HepG2 (cell line): ENCODE measurements at regions of chr13 and their contacts with region 1.

Region 1: DNA sequence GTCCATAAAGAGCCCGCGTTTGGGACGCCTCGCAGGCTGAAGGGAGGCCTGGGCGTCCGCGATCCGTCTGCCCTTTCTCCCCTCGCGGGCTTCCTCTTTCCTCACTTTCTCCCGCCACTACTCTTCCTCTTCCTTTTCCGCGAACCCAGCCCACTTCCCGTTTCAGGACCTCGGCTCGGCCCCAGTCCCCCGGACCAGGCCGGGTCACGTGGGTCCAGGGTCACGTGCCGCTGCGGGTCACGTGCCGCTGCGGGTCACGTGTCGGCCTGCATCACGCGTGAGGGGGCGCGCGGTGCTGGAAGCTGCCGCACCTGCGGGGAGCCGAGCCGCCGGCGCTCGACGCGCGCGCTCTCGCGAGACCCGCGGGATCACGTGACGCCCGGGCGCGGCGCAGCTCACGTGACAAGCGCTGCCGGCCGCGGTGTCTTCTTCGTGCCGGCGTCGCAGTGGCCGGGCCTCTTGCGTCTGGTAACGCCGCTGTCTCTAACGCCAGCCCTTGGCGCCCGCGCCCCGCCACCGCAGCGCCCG is at the start of gene LAMP1:
- DNase-seq: peak; percentile 89
- ATAC-seq: peak; percentile 58
- H3K4me3 ChIP-seq: peak within 1 kb of the TSS; percentile 82 to 90 (median 89)
- H3K27ac ChIP-seq: peak within 1 kb of the TSS; percentile 71
- H3K4me1 ChIP-seq: peaks cover 46% of the 10 kb centered on the region
- H3K27me3 ChIP-seq: no peaks in the 10 kb centered on the region; a peak in 1 of 5 replicates
- CTCF ChIP-seq: peak; percentile 42; the same call in 1 of the 2 replicates
- EP300 ChIP-seq: peak; percentile 78; a peak in 3 of 4 replicates
- POLR2A ChIP-seq: peak; percentile 62 to 63
- RAD21 ChIP-seq: peak; percentile 79
- total RNA-seq, gene LAMP1: 33.2 and 112 TPM in 2 replicates

Region 2: GRCh38 chr13:112873851-112874750 is 422.8 kb before region 1 on chr13:
- CTCF ChIA-PET with region 1: no interaction called
- POLR2A ChIA-PET with region 1: no interaction called
- in situ Hi-C with region 1: no loop called
- intact Hi-C with region 1: no loop called
- DNase-seq: peak; percentile 67
- ATAC-seq: peak; percentile 93
- H3K4me3 ChIP-seq: no peak overlapping the region
- H3K27ac ChIP-seq: no peak overlapping the region
- H3K4me1 ChIP-seq: peaks cover 6% of the 10 kb centered on the region; the same call in 1 of the 2 replicates
- H3K27me3 ChIP-seq: no peaks in the 10 kb centered on the region
- CTCF ChIP-seq: peak; percentile 91
- EP300 ChIP-seq: no peak
- POLR2A ChIP-seq: no peak
- RAD21 ChIP-seq: peak; percentile 80

Region 3: GRCh38 chr13:112990783-112991182 is 306.1 kb before region 1 on chr13:
- CTCF ChIA-PET with region 1: no interaction called
- POLR2A ChIA-PET with region 1: no interaction called
- in situ Hi-C with region 1: no loop called
- intact Hi-C with region 1: no loop called
- DNase-seq: no peak
- ATAC-seq: no peak
- H3K4me3 ChIP-seq: no peak overlapping the region
- H3K27ac ChIP-seq: no peak overlapping the region
- H3K4me1 ChIP-seq: peaks cover 20% of the 10 kb centered on the region
- H3K27me3 ChIP-seq: no peaks in the 10 kb centered on the region
- CTCF ChIP-seq: no peak
- EP300 ChIP-seq: no peak
- POLR2A ChIP-seq: no peak
- RAD21 ChIP-seq: no peak

Region 4: DNA sequence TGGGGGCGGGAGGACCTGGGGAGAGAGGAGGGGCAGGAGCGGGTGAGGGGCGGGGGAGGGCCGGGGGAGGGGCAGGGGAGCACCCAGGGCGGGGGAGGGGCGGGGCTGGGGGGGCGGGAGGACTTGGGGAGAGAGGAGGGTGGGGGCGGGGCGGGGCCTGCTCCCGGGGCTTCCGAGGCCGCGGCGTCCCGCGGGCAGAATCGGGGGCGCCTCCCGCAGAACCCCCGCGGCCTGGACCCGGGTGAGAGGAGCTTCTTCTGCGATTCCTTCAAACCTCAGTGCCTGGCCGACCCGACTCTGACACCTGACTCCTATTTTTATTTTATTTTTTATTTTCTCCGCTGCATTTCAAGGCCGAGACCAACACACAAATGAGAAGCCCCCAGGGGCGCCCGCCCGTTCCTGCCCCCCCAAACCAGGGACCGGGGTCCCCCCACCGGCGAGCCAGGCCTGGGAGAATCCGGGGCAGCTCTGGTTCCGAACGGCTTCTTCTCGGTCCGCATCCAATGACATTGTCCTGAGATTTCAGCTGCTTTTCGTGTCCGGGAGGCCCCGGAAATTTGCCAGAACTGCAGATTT is 67.5 kb after region 1 on chr13:
- CTCF ChIA-PET with region 1: no interaction called
- POLR2A ChIA-PET with region 1: interaction called, 5 read pairs
- in situ Hi-C with region 1: no loop called
- intact Hi-C with region 1: loop called (anchors 5 kb)
- DNase-seq: no peak
- ATAC-seq: no peak
- H3K4me3 ChIP-seq: peak overlapping the region; percentile 36 to 61 (median 54); a peak in 4 of 6 replicates
- H3K27ac ChIP-seq: peak overlapping the region; percentile 46
- H3K4me1 ChIP-seq: peaks cover 52% of the 10 kb centered on the region
- H3K27me3 ChIP-seq: peaks cover 6 to 22% of the 10 kb centered on the region in 2 experiments; a peak in 4 of 5 replicates
- CTCF ChIP-seq: no peak
- EP300 ChIP-seq: no peak
- POLR2A ChIP-seq: 0 out of 4 replicates have a peak, but pooled peaks of 1 of the 2 experiments have one; percentile 37
- RAD21 ChIP-seq: no peak